IMR-90 (cell line): ENCODE measurements at regions of chr9 and their contacts with region 1.

Region 1: GRCh38 chr9:27365707-27366376 is 68.9 kb upstream of the EQTN start:
- DNase-seq: no peak
- ATAC-seq: no peak
- H3K4me3 ChIP-seq: no peak overlapping the region
- H3K27ac ChIP-seq: no peak overlapping the region
- H3K4me1 ChIP-seq: no peaks in the 10 kb centered on the region
- H3K27me3 ChIP-seq: peaks cover 7% of the 10 kb centered on the region
- CTCF ChIP-seq: no peak
- POLR2A ChIP-seq: no peak
- RAD21 ChIP-seq: no peak

Region 2: DNA sequence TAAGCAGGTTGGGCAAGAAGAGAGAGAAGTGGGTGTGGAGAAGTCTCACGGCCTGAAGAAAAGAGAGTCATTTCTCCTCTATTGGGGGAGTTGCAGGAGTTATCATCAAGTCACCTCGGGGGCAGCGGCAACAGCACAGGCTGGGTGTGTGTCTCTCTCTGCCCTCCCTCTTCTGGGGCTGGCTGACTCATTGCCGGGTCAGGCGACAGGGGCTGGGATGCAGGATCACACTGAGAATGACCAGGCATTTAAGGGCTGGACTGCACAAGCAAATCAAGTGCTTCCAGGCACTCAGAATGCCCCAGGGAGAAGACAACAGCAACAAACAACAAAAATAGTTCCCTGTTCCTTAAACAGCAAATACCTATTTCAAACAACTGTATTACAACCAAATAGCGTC is 62.6 kb before region 1 on chr9:
- CTCF ChIA-PET with region 1: no interaction called
- POLR2A ChIA-PET with region 1: no interaction called
- dilution Hi-C with region 1: no loop called
- in situ Hi-C with region 1: loop called (anchors 10 kb)
- intact Hi-C with region 1: no loop called
- DNase-seq: peak; percentile 4
- ATAC-seq: peak; percentile 49; the same call in 1 of the 2 replicates
- H3K4me3 ChIP-seq: no peak overlapping the region
- H3K27ac ChIP-seq: no peak overlapping the region
- H3K4me1 ChIP-seq: peaks cover 1% of the 10 kb centered on the region; the same call in 1 of the 2 replicates
- H3K27me3 ChIP-seq: peaks cover 1% of the 10 kb centered on the region; the same call in 1 of the 2 replicates
- CTCF ChIP-seq: no peak
- POLR2A ChIP-seq: no peak
- RAD21 ChIP-seq: no peak